ENCODE measurements at regions of chr5 and their contacts with region 1.

Region 1: DNA sequence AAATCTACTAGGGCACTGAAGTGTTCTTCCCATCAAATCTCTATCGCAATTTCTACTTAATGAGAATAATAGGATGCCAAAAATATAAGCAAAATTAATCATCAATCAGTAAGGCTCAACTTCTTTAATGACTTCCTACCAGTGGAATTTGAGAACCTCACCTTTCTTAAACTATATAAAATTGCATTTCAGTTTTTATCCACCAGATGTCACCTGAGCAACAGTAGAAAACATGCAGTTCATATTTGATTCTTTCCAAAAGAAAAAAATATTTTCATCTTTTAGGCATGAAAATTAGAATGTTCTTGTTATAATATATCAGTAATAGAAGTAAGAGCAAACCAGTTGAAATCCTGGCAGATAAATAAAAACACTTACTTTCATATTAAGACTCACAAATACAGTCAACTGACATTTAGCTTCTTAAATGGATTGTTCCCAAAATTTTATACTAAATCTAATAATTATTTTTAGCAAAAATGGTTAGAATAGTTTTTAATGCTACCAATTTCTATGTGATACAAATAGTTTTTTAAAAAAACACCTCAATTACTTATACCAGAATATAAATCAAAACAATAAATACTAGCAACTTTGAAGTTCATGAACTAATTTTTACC is 13.4 kb upstream of the CCDC112 start:
- DNase-seq: no peak

Region 2: GRCh38 chr5:115579747-115580173 is 269.9 kb after region 1 on chr5:
- intact Hi-C with region 1: loop called (anchors 5 kb)
- DNase-seq: no peak

Region 3: DNA sequence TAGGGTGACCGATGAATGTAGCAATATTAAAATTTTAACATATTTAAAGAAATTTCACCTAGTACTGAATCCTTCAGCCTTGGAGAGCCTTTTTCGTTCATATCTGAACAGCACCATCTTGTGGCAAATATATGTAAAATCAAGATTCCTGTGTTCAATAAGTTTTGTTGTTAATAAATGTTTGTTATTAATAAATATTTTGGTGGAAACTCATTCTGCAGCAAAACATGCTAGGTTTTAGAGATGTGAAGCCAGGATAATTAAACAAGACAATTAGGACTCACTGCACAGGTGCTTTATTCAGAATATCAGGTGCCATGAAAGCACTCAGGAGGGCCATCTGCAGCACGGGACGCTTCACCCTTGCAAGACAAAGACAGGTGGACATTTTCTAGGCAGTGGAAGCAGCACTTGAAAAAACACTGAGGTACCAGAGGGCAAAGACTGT is 276.8 kb after region 1 on chr5:
- intact Hi-C with region 1: loop called (anchors 5 kb)
- DNase-seq: no peak

Region 4: GRCh38 chr5:115841382-115842088 is 531.7 kb after region 1 on chr5 and contains the starts of genes AP3S1 and ATG12:
- intact Hi-C with region 1: loop called (anchors 10 kb)
- DNase-seq: peak; percentile 88 to 97 (median 93)

Measured in head of caudate nucleus (tissue), 42 donors.